K562 (cell line): ENCODE measurements at regions of chr5 and their contacts with region 1.

Region 1: DNA sequence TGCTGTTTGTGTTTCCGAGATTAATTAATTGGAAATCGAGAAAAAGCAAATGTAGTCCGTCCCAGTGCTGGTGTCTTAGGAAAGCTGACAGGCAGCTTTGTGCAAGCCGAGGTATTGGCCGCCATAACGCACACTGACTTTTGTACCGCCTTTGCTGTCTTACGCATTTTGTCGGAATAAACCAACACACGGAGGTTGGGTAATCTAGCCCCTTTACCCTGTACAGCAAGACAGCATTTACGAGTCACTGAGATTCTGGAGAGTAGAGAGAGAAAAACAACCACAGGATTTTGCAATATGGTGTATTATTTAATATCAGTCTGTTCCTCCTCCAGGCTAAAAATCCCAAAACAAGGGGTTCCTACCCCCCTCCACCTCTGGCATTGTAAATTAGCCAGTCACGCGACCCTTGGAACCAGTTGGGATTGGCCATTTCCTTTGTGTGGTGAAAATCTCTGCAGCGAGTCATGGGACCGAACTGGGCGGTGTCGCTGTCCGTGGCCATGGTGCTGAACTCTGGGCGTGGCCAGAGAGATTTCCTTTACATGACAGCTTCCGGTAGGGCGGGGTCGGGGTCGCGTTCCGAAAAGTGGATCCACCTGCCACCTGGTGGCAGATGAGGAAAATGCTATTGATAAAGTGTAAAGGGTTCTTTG is 10.3 kb upstream of the PCDHB1 start:
- DNase-seq: peak; percentile 72 to 86 (median 82)
- ATAC-seq: peak; percentile 86
- H3K4me3 ChIP-seq: no peak overlapping the region
- H3K27ac ChIP-seq: no peak overlapping the region
- H3K4me1 ChIP-seq: no peaks in the 10 kb centered on the region
- H3K27me3 ChIP-seq: no peaks in the 10 kb centered on the region
- CTCF ChIP-seq: peak; percentile 57 to 62 (median 61)
- EP300 ChIP-seq: no peak
- POLR2A ChIP-seq: no peak
- RAD21 ChIP-seq: peak; percentile 34 to 67; a peak in 3 of 4 replicates

Region 2: DNA sequence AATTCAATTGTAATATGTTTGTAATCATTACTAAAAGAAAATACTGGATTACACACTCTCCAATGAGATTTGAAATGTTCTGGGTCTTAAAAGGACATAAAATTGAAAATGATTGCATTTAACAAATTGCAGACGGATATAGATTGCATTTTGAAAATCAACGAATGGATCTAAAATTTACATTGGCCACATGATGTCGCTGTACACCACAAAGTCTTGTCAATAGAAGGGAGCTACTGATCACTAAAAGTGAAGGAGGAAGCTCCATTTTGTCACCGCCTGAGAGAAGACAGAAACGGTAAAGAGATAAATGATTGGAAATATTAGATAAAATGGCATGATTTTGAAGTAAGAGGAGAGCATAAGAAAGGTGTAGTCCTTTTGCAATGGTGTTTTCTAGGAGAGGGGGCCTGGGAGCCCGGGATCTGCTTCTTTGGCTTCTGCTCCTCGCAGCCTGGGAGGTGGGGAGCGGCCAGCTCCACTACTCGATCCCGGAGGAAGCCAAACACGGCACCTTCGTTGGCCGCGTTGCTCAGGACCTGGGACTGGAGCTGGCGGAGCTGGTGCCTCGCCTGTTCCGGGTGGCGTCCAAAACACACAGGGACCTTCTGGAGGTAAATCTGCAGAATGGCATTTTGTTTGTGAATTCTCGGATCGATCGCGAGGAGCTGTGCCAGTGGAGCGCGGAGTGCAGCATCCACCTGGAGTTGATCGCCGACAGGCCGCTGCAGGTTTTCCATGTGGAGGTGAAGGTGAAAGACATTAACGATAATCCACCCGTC is 254.8 kb before region 1 on chr5 and contains the start of gene PCDHA1:
- CTCF ChIA-PET with region 1: no interaction called
- POLR2A ChIA-PET with region 1: no interaction called
- in situ Hi-C with region 1: no loop called
- intact Hi-C with region 1: loop called (anchors 1 kb)
- DNase-seq: peak in 3 of 4 experiments; percentile 9 to 16 (median 11)
- ATAC-seq: no peak
- H3K4me3 ChIP-seq: no peak within 1 kb of the TSS
- H3K27ac ChIP-seq: no peak within 1 kb of the TSS
- H3K4me1 ChIP-seq: peaks cover 0 to 2% of the 10 kb centered on the region in 2 experiments; a peak in 1 of 5 replicates
- H3K27me3 ChIP-seq: peaks cover 0 to 4% of the 10 kb centered on the region in 2 experiments; a peak in 1 of 5 replicates
- CTCF ChIP-seq: peak; percentile 16 to 36 (median 25); a peak in 3 of 6 replicates
- EP300 ChIP-seq: no peak
- POLR2A ChIP-seq: no peak
- RAD21 ChIP-seq: peak in 1 of 2 experiments; percentile 33; a peak in 2 of 4 replicates
- polyA plus RNA-seq, gene PCDHA1: not detected

Region 3: GRCh38 chr5:140827704-140828361 is 213.1 kb before region 1 on chr5 and contains the start of gene PCDHA6:
- CTCF ChIA-PET with region 1: no interaction called
- POLR2A ChIA-PET with region 1: no interaction called
- in situ Hi-C with region 1: no loop called
- intact Hi-C with region 1: loop called (anchors 5 kb)
- DNase-seq: peak in 1 of 4 experiments; percentile 11
- ATAC-seq: no peak
- H3K4me3 ChIP-seq: no peak within 1 kb of the TSS
- H3K27ac ChIP-seq: no peak within 1 kb of the TSS
- H3K4me1 ChIP-seq: peaks cover 0 to 20% of the 10 kb centered on the region in 2 experiments; a peak in 2 of 5 replicates
- H3K27me3 ChIP-seq: no peaks in the 10 kb centered on the region
- CTCF ChIP-seq: peak; percentile 13 to 28 (median 19); a peak in 2 of 6 replicates
- EP300 ChIP-seq: no peak
- POLR2A ChIP-seq: no peak
- RAD21 ChIP-seq: no peak
- polyA plus RNA-seq, gene PCDHA6: not detected

Region 4: DNA sequence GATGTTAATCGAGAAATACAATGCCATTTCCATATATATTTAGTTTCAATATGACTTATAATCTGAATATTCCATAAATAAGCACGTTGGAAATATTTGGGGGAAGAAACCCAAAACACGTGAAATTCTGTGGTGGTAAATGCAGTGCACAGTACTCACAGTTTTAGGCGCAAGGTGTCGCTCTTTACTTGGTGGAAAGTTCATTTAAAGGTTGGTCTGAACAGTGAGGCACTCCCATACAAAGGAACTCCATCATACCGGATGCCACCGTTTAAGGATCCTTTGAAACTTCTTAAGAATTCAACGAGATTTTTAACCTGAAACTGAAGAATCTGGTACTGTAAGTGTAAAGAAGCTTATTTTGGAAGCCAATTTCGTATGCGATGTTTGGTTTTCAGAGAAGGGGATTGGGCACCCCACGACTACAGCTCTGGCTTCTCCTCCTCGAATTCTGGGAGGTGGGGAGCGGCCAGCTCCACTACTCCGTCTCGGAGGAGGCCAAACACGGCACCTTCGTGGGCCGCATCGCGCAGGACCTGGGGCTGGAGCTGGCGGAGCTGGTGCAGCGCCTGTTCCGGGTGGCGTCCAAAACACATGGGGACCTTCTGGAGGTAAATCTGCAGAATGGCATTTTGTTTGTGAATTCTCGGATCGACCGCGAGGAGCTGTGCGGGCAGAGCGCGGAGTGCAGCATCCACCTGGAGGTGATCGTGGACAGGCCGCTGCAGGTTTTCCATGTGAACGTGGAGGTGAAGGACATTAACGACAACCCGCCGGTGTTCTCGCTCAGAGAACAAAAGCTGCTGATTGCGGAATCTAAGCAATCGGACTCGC is 172.0 kb before region 1 on chr5 and contains the start of gene PCDHA11:
- CTCF ChIA-PET with region 1: no interaction called
- POLR2A ChIA-PET with region 1: no interaction called
- in situ Hi-C with region 1: no loop called
- intact Hi-C with region 1: loop called (anchors 5 kb)
- DNase-seq: peak in 2 of 4 experiments; percentile 7 to 19
- ATAC-seq: peak; percentile 68; the same call in 2 of the 3 replicates
- H3K4me3 ChIP-seq: no peak within 1 kb of the TSS
- H3K27ac ChIP-seq: no peak within 1 kb of the TSS
- H3K4me1 ChIP-seq: no peaks in the 10 kb centered on the region
- H3K27me3 ChIP-seq: no peaks in the 10 kb centered on the region
- CTCF ChIP-seq: peak; percentile 13 to 47 (median 24); a peak in 2 of 6 replicates
- EP300 ChIP-seq: no peak
- POLR2A ChIP-seq: no peak
- RAD21 ChIP-seq: peak in 1 of 2 experiments; percentile 26; a peak in 1 of 4 replicates
- polyA plus RNA-seq, gene PCDHA11: not detected